CD4-positive, alpha-beta T cell (primary cell): ENCODE measurements at regions of chr21 and their contacts with region 1.

Region 1: GRCh38 chr21:26170471-26171257 is at the start of gene APP:
- DNase-seq: peak; percentile 76 to 94 (median 87)
- ATAC-seq: peak; percentile 83
- H3K4me3 ChIP-seq: peak within 1 kb of the TSS; percentile 83
- H3K4me3 Mint-ChIP-seq: peak within 1 kb of the TSS; percentile 98
- H3K27ac ChIP-seq: peak within 1 kb of the TSS in 1 of 2 donors; percentile 19
- H3K27ac Mint-ChIP-seq: peak within 1 kb of the TSS; percentile 77
- H3K4me1 ChIP-seq: peaks cover 22% of the 10 kb centered on the region
- H3K4me1 Mint-ChIP-seq: peaks cover 23% of the 10 kb centered on the region
- H3K27me3 ChIP-seq: no peaks in the 10 kb centered on the region
- H3K27me3 Mint-ChIP-seq: no peaks in the 10 kb centered on the region
- CTCF ChIP-seq: peak; percentile 79
- total RNA-seq, gene APP: 43.6 to 44.4 TPM

Region 2: DNA sequence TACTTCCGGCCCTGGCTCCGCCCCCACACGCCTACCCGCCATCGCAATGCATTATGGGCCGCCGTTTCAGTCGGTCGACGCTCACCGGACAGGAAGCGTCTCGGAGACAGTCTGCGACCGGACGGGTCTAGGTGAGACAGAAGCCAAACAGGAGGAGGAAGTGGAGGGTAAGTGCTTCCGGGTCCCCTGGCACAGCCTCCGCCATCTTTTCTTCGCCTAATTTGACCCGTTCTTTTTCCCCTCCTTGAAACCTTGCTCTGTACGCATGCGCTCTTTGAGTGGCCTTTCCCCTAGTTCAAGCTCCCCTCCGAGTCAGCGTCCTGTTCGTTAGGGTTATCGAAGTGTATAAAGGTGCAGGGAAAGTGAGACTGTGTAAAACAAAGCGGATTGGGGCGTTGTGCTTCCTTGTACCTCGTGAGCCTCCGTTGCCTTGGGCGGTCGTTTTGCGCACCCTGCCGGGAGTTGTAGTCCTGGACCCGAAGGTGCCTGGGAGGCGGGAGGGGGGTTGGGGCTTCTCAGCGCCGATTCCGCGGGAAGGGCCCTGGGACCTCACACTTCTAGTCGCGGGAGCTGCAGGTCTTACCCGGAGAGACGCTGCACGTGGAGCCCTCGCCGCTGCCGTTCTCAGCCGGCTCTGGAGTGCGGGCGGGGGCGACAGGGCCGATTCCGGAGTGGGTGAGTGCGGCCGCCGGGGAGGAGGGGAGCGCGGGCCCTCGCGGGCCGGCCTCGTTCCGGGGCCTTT is 435.6 kb before region 1 on chr21 and contains the starts of genes ATP5PF and GABPA:
- CTCF ChIA-PET with region 1: interaction called, 4 read pairs
- POLR2A ChIA-PET with region 1: interaction called, 6 read pairs
- intact Hi-C with region 1: loop called (anchors 2 to 5 kb)
- DNase-seq: peak; percentile 95 to 99 (median 97)
- ATAC-seq: peak; percentile 87
- H3K4me3 ChIP-seq: peak within 1 kb of the TSS; percentile 73
- H3K4me3 Mint-ChIP-seq: peak within 1 kb of the TSS; percentile 100
- H3K27ac ChIP-seq: peak within 1 kb of the TSS; percentile 90 to 93
- H3K27ac Mint-ChIP-seq: peak within 1 kb of the TSS; percentile 97
- H3K4me1 ChIP-seq: peaks cover 38% of the 10 kb centered on the region
- H3K4me1 Mint-ChIP-seq: peaks cover 70% of the 10 kb centered on the region
- H3K27me3 ChIP-seq: no peaks in the 10 kb centered on the region
- H3K27me3 Mint-ChIP-seq: no peaks in the 10 kb centered on the region
- CTCF ChIP-seq: no peak
- total RNA-seq, gene ATP5PF: 26.7 to 30.3 TPM
- total RNA-seq, gene GABPA: 23.5 to 23.6 TPM

Region 3: DNA sequence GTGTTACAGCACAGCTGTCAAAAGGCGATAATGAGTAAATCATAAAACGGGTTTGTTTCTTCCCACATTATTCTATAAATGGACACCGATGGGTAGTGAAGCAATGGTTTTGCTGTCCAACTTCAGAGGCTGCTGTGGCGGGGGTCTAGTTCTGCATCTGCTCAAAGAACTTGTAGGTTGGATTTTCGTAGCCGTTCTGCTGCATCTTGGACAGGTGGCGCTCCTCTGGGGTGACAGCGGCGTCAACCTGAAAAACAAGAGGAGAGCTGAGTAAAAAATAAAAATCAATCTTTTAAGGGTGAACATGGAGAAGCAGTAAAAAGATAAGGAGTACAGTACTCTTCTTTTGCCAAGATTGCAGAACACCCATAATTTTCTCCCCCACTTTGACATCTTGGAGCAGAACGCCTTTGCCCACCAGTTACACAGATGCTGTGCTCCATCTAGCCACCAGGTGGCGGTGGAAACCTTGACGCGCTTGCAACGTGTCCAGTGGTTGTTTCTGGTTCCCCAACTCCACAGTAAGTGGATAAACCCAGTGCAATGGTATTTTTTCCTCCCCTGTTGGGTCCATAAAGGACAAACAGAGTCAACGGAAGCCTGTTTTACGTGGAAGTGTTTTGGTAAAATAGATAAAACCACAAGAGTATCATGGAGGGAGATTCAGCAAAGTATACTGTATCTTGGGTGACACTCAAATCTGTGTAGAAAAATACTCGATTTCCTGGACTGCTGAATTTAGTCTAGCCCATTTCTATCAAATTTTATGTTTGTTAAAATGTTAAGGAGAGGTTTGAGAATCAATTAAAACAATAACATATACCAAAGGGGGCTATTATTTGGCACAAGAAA is 288.9 kb before region 1 on chr21:
- CTCF ChIA-PET with region 1: interaction called, 3 read pairs
- POLR2A ChIA-PET with region 1: no interaction called
- intact Hi-C with region 1: loop called (anchors 1 to 5 kb)
- DNase-seq: peak; percentile 19 to 73 (median 46)
- ATAC-seq: peak; percentile 73
- H3K4me3 ChIP-seq: no peak overlapping the region
- H3K4me3 Mint-ChIP-seq: no peak overlapping the region
- H3K27ac ChIP-seq: no peak overlapping the region
- H3K27ac Mint-ChIP-seq: no peak overlapping the region
- H3K4me1 ChIP-seq: no peaks in the 10 kb centered on the region
- H3K4me1 Mint-ChIP-seq: no peaks in the 10 kb centered on the region
- H3K27me3 ChIP-seq: no peaks in the 10 kb centered on the region
- H3K27me3 Mint-ChIP-seq: no peaks in the 10 kb centered on the region
- CTCF ChIP-seq: peak; percentile 88

Region 4: GRCh38 chr21:25895565-25896205 is 275.0 kb before region 1 on chr21:
- CTCF ChIA-PET with region 1: interaction called, 9 read pairs
- POLR2A ChIA-PET with region 1: interaction called, 12 read pairs
- intact Hi-C with region 1: loop called (anchors 2 kb)
- DNase-seq: peak in 5 of 14 experiments; percentile 9 to 50 (median 43)
- ATAC-seq: peak; percentile 78
- H3K4me3 ChIP-seq: no peak overlapping the region
- H3K4me3 Mint-ChIP-seq: no peak overlapping the region
- H3K27ac ChIP-seq: no peak overlapping the region
- H3K27ac Mint-ChIP-seq: peak overlapping the region; percentile 19
- H3K4me1 ChIP-seq: no peaks in the 10 kb centered on the region
- H3K4me1 Mint-ChIP-seq: peaks cover 17% of the 10 kb centered on the region
- H3K27me3 ChIP-seq: no peaks in the 10 kb centered on the region
- H3K27me3 Mint-ChIP-seq: no peaks in the 10 kb centered on the region
- CTCF ChIP-seq: peak; percentile 56

Region 5: DNA sequence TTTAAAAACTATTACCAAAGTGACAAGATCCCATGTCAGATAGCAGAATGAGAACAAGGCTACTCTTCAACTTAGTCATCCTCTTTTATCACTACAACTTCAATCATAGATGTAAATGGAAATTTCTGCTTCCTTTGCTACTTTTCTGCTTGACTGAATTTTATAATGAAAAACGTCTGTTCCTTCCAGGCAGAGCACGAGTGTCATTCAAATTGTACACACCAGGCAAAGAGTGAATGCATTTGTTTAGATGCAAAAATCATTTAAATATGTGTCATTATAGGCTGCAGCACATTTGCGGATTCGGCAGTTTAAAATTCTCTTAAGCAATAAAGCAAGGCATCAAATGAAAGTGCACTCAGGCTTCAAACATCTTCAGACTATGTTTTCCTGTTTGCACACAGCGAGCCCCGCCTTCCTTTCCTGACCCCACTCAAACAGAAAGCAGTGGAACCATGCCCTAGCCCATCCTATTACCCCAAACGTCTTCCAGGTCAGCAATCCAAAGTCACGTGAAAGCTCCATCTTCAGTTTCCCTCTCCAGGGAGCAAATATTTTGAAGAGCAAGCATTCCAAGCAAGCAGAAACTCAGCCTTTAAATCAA is 99.7 kb before region 1 on chr21:
- CTCF ChIA-PET with region 1: interaction called, 5 read pairs
- POLR2A ChIA-PET with region 1: interaction called, 17 read pairs
- intact Hi-C with region 1: loop called (anchors 5 kb)
- DNase-seq: peak in 13 of 14 experiments; percentile 6 to 60 (median 26)
- ATAC-seq: peak; percentile 88
- H3K4me3 ChIP-seq: peak overlapping the region; percentile 45
- H3K4me3 Mint-ChIP-seq: peak overlapping the region; percentile 88
- H3K27ac ChIP-seq: peak overlapping the region in 1 of 2 donors; percentile 56
- H3K27ac Mint-ChIP-seq: peak overlapping the region; percentile 90
- H3K4me1 ChIP-seq: peaks cover 12% of the 10 kb centered on the region
- H3K4me1 Mint-ChIP-seq: peaks cover 65% of the 10 kb centered on the region
- H3K27me3 ChIP-seq: no peaks in the 10 kb centered on the region
- H3K27me3 Mint-ChIP-seq: no peaks in the 10 kb centered on the region
- CTCF ChIP-seq: no peak

Region 6: DNA sequence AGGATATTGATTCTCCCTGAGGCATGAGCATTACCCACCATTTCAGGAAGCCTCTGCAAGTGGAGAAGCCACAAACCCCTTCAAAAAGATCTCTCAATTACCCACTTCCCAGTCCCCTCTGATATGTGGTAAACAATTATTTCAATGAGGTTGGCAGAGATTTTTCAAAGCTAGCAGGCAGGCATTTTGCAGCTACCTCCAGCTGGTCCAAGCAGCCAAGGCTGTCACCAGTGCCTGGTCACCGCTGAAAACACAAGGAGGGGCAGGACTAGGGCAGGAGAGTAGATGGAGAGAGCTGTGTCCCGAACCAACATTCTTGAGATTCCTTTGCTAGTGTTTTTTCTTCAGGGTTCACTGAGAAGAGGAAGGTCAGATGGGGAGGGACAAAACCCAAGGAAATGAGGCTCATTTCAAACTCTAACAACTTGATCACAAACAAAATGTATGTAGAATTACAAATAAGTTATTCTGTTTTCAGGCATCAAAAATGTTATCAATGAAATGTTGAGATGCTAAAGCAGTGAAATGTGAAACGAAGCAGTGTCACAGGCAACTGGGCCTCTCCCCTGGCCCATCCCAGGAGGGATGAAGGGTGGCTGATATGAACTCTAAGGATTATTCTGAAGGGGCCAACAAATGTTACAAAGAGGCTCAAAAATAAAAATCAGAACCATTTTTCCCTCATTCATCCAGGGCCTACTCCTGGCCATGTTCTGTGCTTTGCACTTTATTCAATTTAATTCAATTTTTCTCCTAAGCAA is 22.4 kb before region 1 on chr21:
- CTCF ChIA-PET with region 1: interaction called, 8 read pairs
- POLR2A ChIA-PET with region 1: interaction called, 17 read pairs
- intact Hi-C with region 1: loop called in 1 of 2 experiments (anchors 2 kb)
- DNase-seq: peak in 1 of 14 experiments; percentile 5
- ATAC-seq: peak; percentile 44
- H3K4me3 ChIP-seq: no peak overlapping the region
- H3K4me3 Mint-ChIP-seq: peak overlapping the region; percentile 22
- H3K27ac ChIP-seq: no peak overlapping the region
- H3K27ac Mint-ChIP-seq: no peak overlapping the region
- H3K4me1 ChIP-seq: peaks cover 11% of the 10 kb centered on the region
- H3K4me1 Mint-ChIP-seq: peaks cover 24% of the 10 kb centered on the region
- H3K27me3 ChIP-seq: no peaks in the 10 kb centered on the region
- H3K27me3 Mint-ChIP-seq: no peaks in the 10 kb centered on the region
- CTCF ChIP-seq: no peak

Region 7: GRCh38 chr21:26157801-26158200 is 12.9 kb before region 1 on chr21:
- CTCF ChIA-PET with region 1: interaction called, 18 read pairs
- POLR2A ChIA-PET with region 1: interaction called, 12 read pairs
- intact Hi-C with region 1: no loop called
- DNase-seq: no peak
- ATAC-seq: peak; percentile 37
- H3K4me3 ChIP-seq: no peak overlapping the region
- H3K4me3 Mint-ChIP-seq: no peak overlapping the region
- H3K27ac ChIP-seq: no peak overlapping the region
- H3K27ac Mint-ChIP-seq: peak overlapping the region; percentile 78
- H3K4me1 ChIP-seq: no peaks in the 10 kb centered on the region
- H3K4me1 Mint-ChIP-seq: peaks cover 36% of the 10 kb centered on the region
- H3K27me3 ChIP-seq: no peaks in the 10 kb centered on the region
- H3K27me3 Mint-ChIP-seq: no peaks in the 10 kb centered on the region
- CTCF ChIP-seq: no peak

Region 8: GRCh38 chr21:26449161-26449560 is 278.5 kb after region 1 on chr21:
- CTCF ChIA-PET with region 1: no interaction called
- POLR2A ChIA-PET with region 1: no interaction called
- intact Hi-C with region 1: no loop called
- DNase-seq: no peak
- ATAC-seq: no peak
- H3K4me3 ChIP-seq: no peak overlapping the region
- H3K4me3 Mint-ChIP-seq: no peak overlapping the region
- H3K27ac ChIP-seq: no peak overlapping the region
- H3K27ac Mint-ChIP-seq: no peak overlapping the region
- H3K4me1 ChIP-seq: no peaks in the 10 kb centered on the region
- H3K4me1 Mint-ChIP-seq: no peaks in the 10 kb centered on the region
- H3K27me3 ChIP-seq: no peaks in the 10 kb centered on the region
- H3K27me3 Mint-ChIP-seq: no peaks in the 10 kb centered on the region
- CTCF ChIP-seq: no peak